Dendritic cell treated with granulocyte-macrophage colony-stimulating factor and Interleukin-4, amounts not matched to agents 40 ng/mL and 50 ng/mL, for 4 days (primary cell): ENCODE measurements at regions of chr13 and their contacts with region 1.

Region 1: GRCh38 chr13:73754727-73755292 is 379.4 kb downstream of the KLF12 start:
- H3K4me3 Mint-ChIP-seq: no peak overlapping the region
- H3K27ac Mint-ChIP-seq: no peak overlapping the region
- H3K4me1 Mint-ChIP-seq: no peaks in the 10 kb centered on the region
- H3K27me3 Mint-ChIP-seq: no peaks in the 10 kb centered on the region

Region 2: DNA sequence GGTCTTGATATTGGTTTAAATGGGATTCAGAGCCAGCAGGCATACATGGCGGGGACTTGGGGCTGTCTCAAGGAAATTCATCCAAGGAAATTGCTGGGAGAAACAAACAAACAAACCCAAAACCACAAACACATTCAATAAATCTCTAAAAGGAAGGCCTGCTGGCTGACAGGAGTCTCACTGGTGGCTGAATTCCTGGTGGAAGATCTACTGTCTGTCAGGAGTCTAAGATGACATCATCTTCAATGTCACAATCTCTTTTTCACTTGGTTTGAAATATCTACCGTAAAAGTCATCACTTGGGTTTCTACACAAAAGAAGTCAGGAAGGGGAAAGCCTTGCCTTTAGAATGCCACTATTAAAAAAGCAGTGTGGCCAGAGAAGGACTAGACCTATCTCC is 608.1 kb before region 1 on chr13:
- intact Hi-C with region 1: no loop called
- H3K4me3 Mint-ChIP-seq: no peak overlapping the region
- H3K27ac Mint-ChIP-seq: no peak overlapping the region
- H3K4me1 Mint-ChIP-seq: peaks cover 6% of the 10 kb centered on the region
- H3K27me3 Mint-ChIP-seq: no peaks in the 10 kb centered on the region

Region 3: GRCh38 chr13:73286976-73287674 is 467.7 kb before region 1 on chr13:
- intact Hi-C with region 1: no loop called
- H3K4me3 Mint-ChIP-seq: no peak overlapping the region
- H3K27ac Mint-ChIP-seq: no peak overlapping the region
- H3K4me1 Mint-ChIP-seq: peaks cover 6% of the 10 kb centered on the region
- H3K27me3 Mint-ChIP-seq: no peaks in the 10 kb centered on the region

Region 4: GRCh38 chr13:73625562-73626339 is 129.1 kb before region 1 on chr13:
- intact Hi-C with region 1: no loop called
- H3K4me3 Mint-ChIP-seq: no peak overlapping the region
- H3K27ac Mint-ChIP-seq: no peak overlapping the region
- H3K4me1 Mint-ChIP-seq: no peaks in the 10 kb centered on the region
- H3K27me3 Mint-ChIP-seq: no peaks in the 10 kb centered on the region

Region 5: DNA sequence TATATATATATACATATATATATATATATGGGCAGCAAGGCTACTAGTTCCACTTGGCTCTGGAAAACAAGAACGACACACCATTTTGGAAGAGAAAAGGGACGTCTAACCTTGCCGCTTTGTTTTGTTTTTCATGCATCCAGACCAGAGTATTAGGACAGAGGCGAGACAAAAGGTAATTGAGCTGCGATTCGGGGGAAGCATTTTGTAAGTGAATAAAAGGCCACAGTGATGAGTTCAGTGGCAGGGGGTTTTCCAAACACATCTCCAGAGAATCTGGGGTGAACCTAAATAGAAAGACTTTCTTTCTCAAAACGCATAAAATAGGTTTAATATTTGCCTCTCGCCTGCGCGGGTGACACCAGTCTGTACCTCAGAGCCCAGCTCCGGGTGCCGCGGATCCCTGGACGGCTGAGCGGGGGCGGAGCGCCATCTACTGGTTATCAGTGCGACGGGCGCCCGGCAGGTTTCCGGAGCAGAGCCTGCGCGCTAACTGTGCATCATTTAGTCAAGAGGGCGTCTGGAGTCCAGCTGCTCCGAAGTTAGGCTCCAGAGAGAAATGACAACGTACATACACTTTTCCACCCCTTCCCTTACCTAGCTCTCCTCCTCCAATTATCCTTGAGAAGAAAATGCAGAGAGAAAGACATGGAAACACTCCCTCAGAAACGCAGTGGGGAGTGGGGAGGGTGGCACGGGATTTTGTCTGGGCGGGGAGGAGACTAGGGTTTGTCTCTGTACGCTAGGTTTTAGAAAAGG is 1464.8 kb after region 1 on chr13:
- intact Hi-C with region 1: loop called (anchors 1 kb)
- H3K4me3 Mint-ChIP-seq: no peak overlapping the region
- H3K27ac Mint-ChIP-seq: no peak overlapping the region
- H3K4me1 Mint-ChIP-seq: peaks cover 5% of the 10 kb centered on the region
- H3K27me3 Mint-ChIP-seq: peaks cover 14% of the 10 kb centered on the region